ENCODE measurements at regions of chr2 and their contacts with region 1.

Region 1: GRCh38 chr2:61978522-61978921 is 73.0 kb downstream of the COMMD1 start:
- DNase-seq: peak; percentile 31
- H3K4me3 ChIP-seq: no peak overlapping the region
- H3K27ac ChIP-seq: no peak overlapping the region
- H3K4me1 ChIP-seq: no peaks in the 10 kb centered on the region
- H3K27me3 ChIP-seq: no peaks in the 10 kb centered on the region
- CTCF ChIP-seq: no peak

Region 2: GRCh38 chr2:61841286-61841685 is 137.2 kb before region 1 on chr2:
- CTCF ChIA-PET with region 1: interaction called, 11 read pairs
- POLR2A ChIA-PET with region 1: no interaction called
- intact Hi-C with region 1: no loop called
- DNase-seq: no peak
- H3K4me3 ChIP-seq: no peak overlapping the region
- H3K27ac ChIP-seq: no peak overlapping the region
- H3K4me1 ChIP-seq: no peaks in the 10 kb centered on the region
- H3K27me3 ChIP-seq: no peaks in the 10 kb centered on the region
- CTCF ChIP-seq: no peak

Region 3: DNA sequence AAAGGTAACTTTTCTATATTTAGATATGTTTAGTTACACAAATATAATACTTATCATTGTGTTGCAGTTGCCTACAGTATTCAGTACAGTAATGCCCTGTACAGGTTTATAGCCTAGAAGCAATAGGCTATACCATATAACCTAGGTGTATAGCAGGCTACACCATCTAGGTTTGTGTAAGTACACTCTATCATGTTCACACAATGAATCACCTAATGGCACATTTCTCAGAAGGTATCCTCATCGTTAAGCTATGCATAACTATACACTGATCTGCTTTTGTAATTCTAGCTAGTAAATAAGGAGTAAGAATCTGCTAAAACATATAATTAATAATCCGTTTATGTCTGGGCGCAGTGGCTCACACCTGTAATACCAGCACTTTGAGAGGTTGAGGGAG is 29.0 kb after region 1 on chr2:
- CTCF ChIA-PET with region 1: interaction called, 10 read pairs
- POLR2A ChIA-PET with region 1: no interaction called
- intact Hi-C with region 1: no loop called
- DNase-seq: no peak
- H3K4me3 ChIP-seq: no peak overlapping the region
- H3K27ac ChIP-seq: no peak overlapping the region
- H3K4me1 ChIP-seq: no peaks in the 10 kb centered on the region
- H3K27me3 ChIP-seq: no peaks in the 10 kb centered on the region
- CTCF ChIP-seq: no peak